B cell (primary cell): ENCODE measurements at regions of chr7 and their contacts with region 1.

Region 1: GRCh38 chr7:130069978-130070860 is at the start of gene KLHDC10:
- DNase-seq: peak; percentile 97
- ATAC-seq: peak; percentile 93
- H3K4me3 ChIP-seq: peak within 1 kb of the TSS; percentile 68 to 90 (median 69)
- H3K4me3 Mint-ChIP-seq: peak within 1 kb of the TSS; percentile 89
- H3K27ac ChIP-seq: peak within 1 kb of the TSS; percentile 75 to 84
- H3K27ac Mint-ChIP-seq: peak within 1 kb of the TSS; percentile 88
- H3K4me1 ChIP-seq: peaks cover 22 to 24% of the 10 kb centered on the region in 2 donors
- H3K4me1 Mint-ChIP-seq: peaks cover 36% of the 10 kb centered on the region
- H3K27me3 ChIP-seq: no peaks in the 10 kb centered on the region
- H3K27me3 Mint-ChIP-seq: no peaks in the 10 kb centered on the region
- CTCF ChIP-seq: no peak
- total RNA-seq, gene KLHDC10: 25.3 and 25.7 TPM in 2 replicates

Region 2: DNA sequence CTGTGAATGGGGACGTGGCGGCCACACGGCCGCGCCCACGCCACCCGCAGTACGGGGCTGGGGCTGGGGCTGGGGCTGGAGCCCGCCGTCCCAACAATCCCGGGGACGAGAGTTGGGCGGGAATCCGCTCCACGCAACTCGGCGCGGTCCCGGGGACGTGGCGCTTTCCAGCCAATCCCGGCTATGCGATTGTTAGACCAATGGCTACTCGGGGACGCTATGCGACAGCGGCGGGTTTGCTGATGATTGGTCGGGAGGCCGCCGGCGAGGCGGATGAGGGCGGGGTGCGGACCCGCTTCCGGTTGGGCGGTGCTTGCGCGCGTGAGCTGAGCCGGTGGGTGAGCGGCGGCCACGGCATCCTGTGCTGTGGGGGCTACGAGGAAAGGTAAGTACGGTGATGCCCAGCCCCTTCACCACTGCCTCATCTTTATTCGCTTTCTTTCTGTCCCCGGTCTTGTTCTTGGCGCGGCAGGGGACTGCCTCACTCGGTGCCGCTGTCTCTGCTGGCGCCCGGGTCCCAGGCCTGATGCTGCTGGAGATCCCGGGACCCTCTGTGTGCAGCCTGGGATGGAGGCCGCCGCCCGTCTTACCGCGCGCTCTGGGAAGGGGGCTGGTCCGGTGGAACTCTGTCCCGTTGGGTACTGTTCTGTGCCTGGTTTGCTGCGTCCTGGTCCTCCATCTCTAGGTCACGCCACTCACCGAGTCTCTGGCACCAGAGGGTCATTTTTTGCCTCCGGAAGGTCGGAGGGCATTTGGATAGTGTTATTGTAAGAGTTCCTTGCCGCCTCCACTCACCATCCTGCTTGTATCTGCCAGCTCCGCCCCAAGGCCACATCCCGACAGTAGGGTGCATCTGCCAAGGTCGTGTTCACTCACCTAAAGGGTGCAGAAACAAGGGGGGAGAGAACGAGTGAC is 1330.9 kb before region 1 on chr7 and contains the start of gene CALU:
- CTCF ChIA-PET with region 1: no interaction called
- POLR2A ChIA-PET with region 1: no interaction called
- intact Hi-C with region 1: loop called (anchors 5 kb)
- DNase-seq: peak; percentile 93
- ATAC-seq: peak; percentile 96
- H3K4me3 ChIP-seq: peak within 1 kb of the TSS; percentile 58 to 96 (median 88)
- H3K4me3 Mint-ChIP-seq: peak within 1 kb of the TSS; percentile 100
- H3K27ac ChIP-seq: peak within 1 kb of the TSS; percentile 67 to 83
- H3K27ac Mint-ChIP-seq: peak within 1 kb of the TSS; percentile 93
- H3K4me1 ChIP-seq: peaks cover 34 to 48% of the 10 kb centered on the region in 2 donors
- H3K4me1 Mint-ChIP-seq: peaks cover 41% of the 10 kb centered on the region
- H3K27me3 ChIP-seq: no peaks in the 10 kb centered on the region
- H3K27me3 Mint-ChIP-seq: no peaks in the 10 kb centered on the region
- CTCF ChIP-seq: no peak
- total RNA-seq, gene CALU: 11.2 and 12.4 TPM in 2 replicates

Region 3: GRCh38 chr7:130050773-130051125 is 19.5 kb before region 1 on chr7:
- CTCF ChIA-PET with region 1: interaction called, 3 read pairs
- POLR2A ChIA-PET with region 1: interaction called, 3 read pairs
- intact Hi-C with region 1: loop called (anchors 1 kb)
- DNase-seq: no peak
- ATAC-seq: no peak
- H3K4me3 ChIP-seq: peak overlapping the region; percentile 73 to 91 (median 80)
- H3K4me3 Mint-ChIP-seq: peak overlapping the region; percentile 97
- H3K27ac ChIP-seq: peak overlapping the region in 1 of 2 donors; percentile 70
- H3K27ac Mint-ChIP-seq: peak overlapping the region; percentile 88
- H3K4me1 ChIP-seq: peaks cover 5 to 14% of the 10 kb centered on the region in 2 donors
- H3K4me1 Mint-ChIP-seq: peaks cover 9% of the 10 kb centered on the region
- H3K27me3 ChIP-seq: peaks cover 0 to 4% (median 0%) of the 10 kb centered on the region in 4 experiments
- H3K27me3 Mint-ChIP-seq: no peaks in the 10 kb centered on the region
- CTCF ChIP-seq: no peak

Region 4: GRCh38 chr7:130149281-130150139 is 79.3 kb after region 1 on chr7:
- CTCF ChIA-PET with region 1: no interaction called
- POLR2A ChIA-PET with region 1: interaction called, 10 read pairs
- intact Hi-C with region 1: loop called (anchors 1 kb)
- DNase-seq: peak; percentile 83
- ATAC-seq: peak; percentile 79
- H3K4me3 ChIP-seq: peak overlapping the region in 3 of 5 experiments; percentile 8 to 34 (median 29)
- H3K4me3 Mint-ChIP-seq: peak overlapping the region; percentile 77
- H3K27ac ChIP-seq: peak overlapping the region; percentile 76 to 82
- H3K27ac Mint-ChIP-seq: peak overlapping the region; percentile 95
- H3K4me1 ChIP-seq: peaks cover 34 to 75% of the 10 kb centered on the region in 2 donors
- H3K4me1 Mint-ChIP-seq: peaks cover 48% of the 10 kb centered on the region
- H3K27me3 ChIP-seq: no peaks in the 10 kb centered on the region
- H3K27me3 Mint-ChIP-seq: no peaks in the 10 kb centered on the region
- CTCF ChIP-seq: no peak

Region 5: DNA sequence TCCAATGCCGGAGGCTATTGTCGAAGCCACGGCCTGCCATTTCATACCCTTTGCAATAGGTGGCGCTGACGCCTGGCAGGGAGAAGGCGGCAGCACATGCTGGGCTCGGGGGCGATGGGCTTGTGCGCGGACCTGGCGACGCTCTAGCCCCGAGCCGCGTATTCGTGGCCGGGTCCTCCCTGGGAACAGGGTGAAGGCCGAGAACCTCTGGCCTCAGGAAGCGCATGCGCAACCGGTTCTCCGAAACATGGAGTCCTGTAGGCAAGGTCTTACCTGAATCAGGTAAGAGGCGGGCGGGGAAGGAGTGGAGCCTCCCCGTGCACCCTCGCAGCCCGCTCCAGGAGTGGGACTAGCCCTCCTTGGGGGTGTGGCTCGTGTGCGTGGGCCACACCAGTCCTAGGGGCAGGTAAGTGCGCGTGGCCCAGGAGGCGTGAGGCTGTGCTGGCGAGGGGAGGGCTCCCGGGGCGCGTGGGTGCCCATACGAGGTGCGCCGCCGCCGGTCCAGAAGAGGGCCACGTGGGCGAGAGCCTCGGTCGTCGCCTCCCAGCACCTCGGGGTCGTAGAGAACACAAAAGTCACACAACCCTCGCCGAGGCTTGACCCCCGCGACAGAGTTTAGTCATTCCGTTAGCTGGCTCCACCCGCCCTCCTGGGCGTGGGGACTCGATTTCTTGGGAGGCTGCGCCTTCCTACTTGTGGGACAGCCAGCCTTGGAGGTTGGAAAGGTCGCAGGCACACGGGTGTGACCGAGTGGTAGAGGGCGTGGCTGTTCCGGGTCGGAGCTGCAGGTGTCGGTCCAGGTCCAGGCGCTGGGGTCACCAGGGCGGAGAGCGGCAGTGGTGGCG is 416.1 kb after region 1 on chr7:
- CTCF ChIA-PET with region 1: interaction called, 3 read pairs
- POLR2A ChIA-PET with region 1: no interaction called
- intact Hi-C with region 1: loop called (anchors 1 kb)
- DNase-seq: peak; percentile 77
- ATAC-seq: peak; percentile 89
- H3K4me3 ChIP-seq: peak overlapping the region in 4 of 5 experiments; percentile 52 to 73 (median 66)
- H3K4me3 Mint-ChIP-seq: peak overlapping the region; percentile 93
- H3K27ac ChIP-seq: no peak overlapping the region
- H3K27ac Mint-ChIP-seq: peak overlapping the region; percentile 74
- H3K4me1 ChIP-seq: peaks cover 22 to 24% of the 10 kb centered on the region in 2 donors
- H3K4me1 Mint-ChIP-seq: peaks cover 26% of the 10 kb centered on the region
- H3K27me3 ChIP-seq: peaks cover 0 to 32% (median 19%) of the 10 kb centered on the region in 4 experiments
- H3K27me3 Mint-ChIP-seq: peaks cover 53% of the 10 kb centered on the region
- CTCF ChIP-seq: peak; percentile 93

Region 6: DNA sequence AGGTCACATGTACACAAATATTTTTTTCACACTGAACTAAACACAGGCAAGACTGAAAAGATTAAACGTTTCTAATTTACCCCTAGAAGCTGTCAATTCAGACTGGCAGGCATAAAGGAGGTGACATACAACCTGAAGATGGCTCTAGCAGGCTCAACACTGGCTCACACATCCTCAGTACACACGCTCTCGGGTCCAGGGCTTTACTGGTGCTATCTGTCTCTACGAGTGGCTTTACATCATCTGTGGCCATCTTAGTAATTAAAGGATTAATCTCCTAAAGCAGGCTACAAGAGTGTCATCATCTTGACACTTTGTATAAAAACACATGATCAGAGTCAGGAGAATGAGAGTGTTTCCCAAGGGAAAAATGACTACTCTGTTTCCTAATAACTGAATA is 541.0 kb after region 1 on chr7:
- CTCF ChIA-PET with region 1: no interaction called
- POLR2A ChIA-PET with region 1: no interaction called
- intact Hi-C with region 1: no loop called
- DNase-seq: no peak
- ATAC-seq: no peak
- H3K4me3 ChIP-seq: no peak overlapping the region
- H3K4me3 Mint-ChIP-seq: no peak overlapping the region
- H3K27ac ChIP-seq: no peak overlapping the region
- H3K27ac Mint-ChIP-seq: no peak overlapping the region
- H3K4me1 ChIP-seq: no peaks in the 10 kb centered on the region
- H3K4me1 Mint-ChIP-seq: no peaks in the 10 kb centered on the region
- H3K27me3 ChIP-seq: no peaks in the 10 kb centered on the region
- H3K27me3 Mint-ChIP-seq: no peaks in the 10 kb centered on the region
- CTCF ChIP-seq: no peak

Region 7: DNA sequence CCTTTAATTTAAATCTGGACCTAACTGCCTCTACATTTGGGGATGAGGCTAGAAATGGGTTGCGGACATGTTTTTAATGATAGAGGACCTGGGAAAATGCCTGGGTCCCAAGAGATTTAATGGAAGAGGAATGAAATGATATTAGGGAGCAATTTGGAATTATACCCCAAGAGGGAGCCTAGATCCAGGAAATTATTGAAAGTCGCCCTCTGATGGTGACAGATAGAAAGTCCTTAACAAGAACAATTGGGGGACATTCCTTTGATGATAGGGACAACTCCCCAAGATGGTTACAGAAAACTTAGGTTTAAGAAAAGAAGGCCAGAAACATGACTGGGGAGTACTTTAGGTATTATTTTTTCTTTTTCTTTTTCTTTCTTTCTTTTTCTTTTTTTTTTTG is 625.6 kb after region 1 on chr7:
- CTCF ChIA-PET with region 1: interaction called, 9 read pairs
- POLR2A ChIA-PET with region 1: no interaction called
- intact Hi-C with region 1: loop called (anchors 1 kb)
- DNase-seq: peak; percentile 23
- ATAC-seq: no peak
- H3K4me3 ChIP-seq: no peak overlapping the region
- H3K4me3 Mint-ChIP-seq: no peak overlapping the region
- H3K27ac ChIP-seq: no peak overlapping the region
- H3K27ac Mint-ChIP-seq: no peak overlapping the region
- H3K4me1 ChIP-seq: no peaks in the 10 kb centered on the region
- H3K4me1 Mint-ChIP-seq: no peaks in the 10 kb centered on the region
- H3K27me3 ChIP-seq: no peaks in the 10 kb centered on the region
- H3K27me3 Mint-ChIP-seq: peaks cover 6% of the 10 kb centered on the region
- CTCF ChIP-seq: peak; percentile 34

Region 8: DNA sequence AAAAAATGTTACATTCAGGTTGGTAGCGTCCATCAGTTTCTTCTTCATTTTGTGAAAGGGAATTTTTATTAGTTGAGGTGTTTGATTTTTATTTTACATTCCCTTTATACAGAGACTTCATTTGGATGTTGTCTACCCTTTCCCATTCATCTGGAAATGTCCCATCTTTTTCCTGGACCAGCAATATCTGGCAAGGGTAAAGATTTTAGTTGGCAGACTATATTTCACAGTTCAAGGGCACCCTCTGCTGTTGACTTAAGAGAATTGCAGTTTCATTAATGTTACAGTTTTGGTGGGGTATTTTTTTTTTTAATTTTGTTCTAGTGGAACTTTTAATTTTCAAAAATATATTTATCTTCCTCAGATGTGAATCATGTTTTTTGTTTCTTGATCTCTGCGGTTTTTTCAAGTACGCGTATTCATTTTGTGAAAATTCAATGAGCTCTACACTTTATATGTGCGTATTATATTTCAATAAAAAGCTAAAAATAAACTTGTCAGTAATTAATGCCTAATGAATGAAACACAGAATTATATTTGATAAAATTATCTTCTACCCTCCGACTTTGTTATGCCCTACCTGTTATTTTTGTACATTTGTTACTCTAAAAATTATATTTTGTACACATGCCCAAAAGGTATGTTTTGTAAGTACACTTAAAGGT is 761.7 kb after region 1 on chr7:
- CTCF ChIA-PET with region 1: interaction called, 24 read pairs
- POLR2A ChIA-PET with region 1: interaction called, 11 read pairs
- intact Hi-C with region 1: no loop called
- DNase-seq: peak; percentile 58
- ATAC-seq: no peak
- H3K4me3 ChIP-seq: no peak overlapping the region
- H3K4me3 Mint-ChIP-seq: no peak overlapping the region
- H3K27ac ChIP-seq: no peak overlapping the region
- H3K27ac Mint-ChIP-seq: no peak overlapping the region
- H3K4me1 ChIP-seq: no peaks in the 10 kb centered on the region
- H3K4me1 Mint-ChIP-seq: no peaks in the 10 kb centered on the region
- H3K27me3 ChIP-seq: peaks cover 0 to 3% (median 0%) of the 10 kb centered on the region in 4 experiments
- H3K27me3 Mint-ChIP-seq: peaks cover 7% of the 10 kb centered on the region
- CTCF ChIP-seq: peak; percentile 94